GM12878 (cell line): ENCODE measurements at regions of chr1 and their contacts with region 1.

Region 1: DNA sequence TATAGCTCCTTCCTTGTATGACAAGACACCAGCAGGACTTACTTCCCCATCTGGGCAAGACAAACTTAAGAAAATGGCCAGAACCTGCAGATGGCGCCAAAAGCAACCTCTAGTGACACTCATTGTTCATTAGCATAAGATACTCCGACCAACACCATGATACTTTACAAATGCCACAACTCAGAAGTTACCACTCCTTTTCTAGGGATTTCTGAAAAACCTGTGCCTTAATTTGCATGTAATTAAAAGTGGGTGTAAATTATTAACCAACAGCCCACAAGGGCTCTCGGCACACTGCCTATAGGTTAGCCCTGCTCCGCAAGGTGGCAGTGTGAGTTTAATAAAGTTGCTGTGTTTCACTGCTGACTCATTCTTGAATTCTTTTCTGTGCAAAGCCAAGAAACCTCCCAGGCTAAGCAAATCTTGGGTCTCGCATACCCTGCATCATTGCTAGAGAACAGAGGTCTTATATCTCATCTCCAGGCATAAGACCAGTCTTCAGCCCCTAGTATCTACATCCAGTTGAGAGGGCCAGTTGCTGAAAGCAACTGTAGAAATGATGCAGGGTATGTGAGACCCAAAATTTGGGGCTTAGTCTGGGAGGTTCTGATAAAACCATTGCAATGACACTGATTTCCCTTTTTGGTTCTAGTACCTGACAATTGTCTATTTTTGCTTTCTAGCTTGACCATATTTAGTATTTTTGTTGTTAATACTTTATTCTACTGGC is 86.4 kb downstream of the FAF1 start:
- DNase-seq: peak; percentile 76
- ATAC-seq: peak; percentile 99
- H3K4me3 ChIP-seq: no peak overlapping the region
- H3K27ac ChIP-seq: peak overlapping the region; percentile 29; the same call in 1 of the 2 replicates
- H3K4me1 ChIP-seq: peaks cover 9% of the 10 kb centered on the region
- H3K27me3 ChIP-seq: no peaks in the 10 kb centered on the region
- CTCF ChIP-seq: peak; percentile 62 to 90 (median 62)
- EP300 ChIP-seq: no peak
- POLR2A ChIP-seq: no peak
- RAD21 ChIP-seq: peak; percentile 73

Region 2: GRCh38 chr1:50852889-50853288 is 20.7 kb before region 1 on chr1:
- CTCF ChIA-PET with region 1: interaction called, 47 read pairs
- POLR2A ChIA-PET with region 1: no interaction called
- RAD21 ChIA-PET with region 1: interaction called, 3 read pairs
- SMC1A ChIA-PET with region 1: interaction called, 7 read pairs
- in situ Hi-C with region 1: no loop called
- intact Hi-C with region 1: no loop called
- DNase-seq: no peak
- ATAC-seq: no peak
- H3K4me3 ChIP-seq: no peak overlapping the region
- H3K27ac ChIP-seq: no peak overlapping the region
- H3K4me1 ChIP-seq: no peaks in the 10 kb centered on the region
- H3K27me3 ChIP-seq: no peaks in the 10 kb centered on the region
- CTCF ChIP-seq: no peak
- EP300 ChIP-seq: no peak
- POLR2A ChIP-seq: no peak
- RAD21 ChIP-seq: no peak

Region 3: DNA sequence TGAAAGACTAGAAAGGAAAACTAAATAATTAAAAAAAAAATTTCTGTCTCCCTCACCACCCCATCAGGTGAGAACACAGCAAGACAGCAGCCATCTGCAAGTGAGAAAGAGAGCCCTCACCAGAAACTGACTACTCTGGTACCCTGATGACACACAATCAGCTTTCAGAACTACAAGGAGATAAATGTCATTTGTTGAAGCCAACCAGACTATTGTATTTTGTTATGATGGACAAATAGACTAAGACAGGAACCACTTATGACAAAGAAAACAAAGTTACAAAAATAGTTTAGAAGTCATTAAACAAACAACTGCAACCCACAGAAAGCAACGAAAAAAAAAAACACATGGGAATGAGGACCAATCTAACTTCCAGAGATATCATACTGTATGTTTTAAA is 11.9 kb before region 1 on chr1:
- CTCF ChIA-PET with region 1: interaction called, 47 read pairs
- POLR2A ChIA-PET with region 1: no interaction called
- RAD21 ChIA-PET with region 1: interaction called, 5 read pairs
- SMC1A ChIA-PET with region 1: interaction called, 7 read pairs
- in situ Hi-C with region 1: no loop called
- intact Hi-C with region 1: no loop called
- DNase-seq: no peak
- ATAC-seq: no peak
- H3K4me3 ChIP-seq: no peak overlapping the region
- H3K27ac ChIP-seq: no peak overlapping the region
- H3K4me1 ChIP-seq: no peaks in the 10 kb centered on the region
- H3K27me3 ChIP-seq: no peaks in the 10 kb centered on the region
- CTCF ChIP-seq: no peak
- EP300 ChIP-seq: no peak
- POLR2A ChIP-seq: no peak
- RAD21 ChIP-seq: no peak

Region 4: GRCh38 chr1:50968158-50968820 is 94.7 kb after region 1 on chr1:
- CTCF ChIA-PET with region 1: interaction called, 6 read pairs
- POLR2A ChIA-PET with region 1: no interaction called
- RAD21 ChIA-PET with region 1: no interaction called
- SMC1A ChIA-PET with region 1: interaction called, 4 read pairs
- in situ Hi-C with region 1: no loop called
- intact Hi-C with region 1: loop called (anchors 2 kb)
- DNase-seq: no peak
- ATAC-seq: peak; percentile 87
- H3K4me3 ChIP-seq: peak overlapping the region; percentile 99
- H3K27ac ChIP-seq: peak overlapping the region; percentile 92
- H3K4me1 ChIP-seq: no peaks in the 10 kb centered on the region; the same call in 1 of the 2 replicates
- H3K27me3 ChIP-seq: no peaks in the 10 kb centered on the region
- CTCF ChIP-seq: peak; percentile 28 to 36 (median 36); a peak in 4 of 6 replicates
- EP300 ChIP-seq: no peak
- POLR2A ChIP-seq: peak; percentile 75
- RAD21 ChIP-seq: peak; percentile 21; the same call in 1 of the 2 replicates

Region 5: GRCh38 chr1:51044834-51045233 is 171.2 kb after region 1 on chr1:
- CTCF ChIA-PET with region 1: interaction called, 4 read pairs
- POLR2A ChIA-PET with region 1: no interaction called
- RAD21 ChIA-PET with region 1: interaction called, 4 read pairs
- SMC1A ChIA-PET with region 1: no interaction called
- in situ Hi-C with region 1: no loop called
- intact Hi-C with region 1: loop called (anchors 1 kb)
- DNase-seq: no peak
- ATAC-seq: no peak
- H3K4me3 ChIP-seq: no peak overlapping the region
- H3K27ac ChIP-seq: no peak overlapping the region
- H3K4me1 ChIP-seq: no peaks in the 10 kb centered on the region
- H3K27me3 ChIP-seq: no peaks in the 10 kb centered on the region
- CTCF ChIP-seq: no peak; a peak in 1 of 6 replicates
- EP300 ChIP-seq: no peak
- POLR2A ChIP-seq: no peak
- RAD21 ChIP-seq: peak; percentile 43

Region 6: DNA sequence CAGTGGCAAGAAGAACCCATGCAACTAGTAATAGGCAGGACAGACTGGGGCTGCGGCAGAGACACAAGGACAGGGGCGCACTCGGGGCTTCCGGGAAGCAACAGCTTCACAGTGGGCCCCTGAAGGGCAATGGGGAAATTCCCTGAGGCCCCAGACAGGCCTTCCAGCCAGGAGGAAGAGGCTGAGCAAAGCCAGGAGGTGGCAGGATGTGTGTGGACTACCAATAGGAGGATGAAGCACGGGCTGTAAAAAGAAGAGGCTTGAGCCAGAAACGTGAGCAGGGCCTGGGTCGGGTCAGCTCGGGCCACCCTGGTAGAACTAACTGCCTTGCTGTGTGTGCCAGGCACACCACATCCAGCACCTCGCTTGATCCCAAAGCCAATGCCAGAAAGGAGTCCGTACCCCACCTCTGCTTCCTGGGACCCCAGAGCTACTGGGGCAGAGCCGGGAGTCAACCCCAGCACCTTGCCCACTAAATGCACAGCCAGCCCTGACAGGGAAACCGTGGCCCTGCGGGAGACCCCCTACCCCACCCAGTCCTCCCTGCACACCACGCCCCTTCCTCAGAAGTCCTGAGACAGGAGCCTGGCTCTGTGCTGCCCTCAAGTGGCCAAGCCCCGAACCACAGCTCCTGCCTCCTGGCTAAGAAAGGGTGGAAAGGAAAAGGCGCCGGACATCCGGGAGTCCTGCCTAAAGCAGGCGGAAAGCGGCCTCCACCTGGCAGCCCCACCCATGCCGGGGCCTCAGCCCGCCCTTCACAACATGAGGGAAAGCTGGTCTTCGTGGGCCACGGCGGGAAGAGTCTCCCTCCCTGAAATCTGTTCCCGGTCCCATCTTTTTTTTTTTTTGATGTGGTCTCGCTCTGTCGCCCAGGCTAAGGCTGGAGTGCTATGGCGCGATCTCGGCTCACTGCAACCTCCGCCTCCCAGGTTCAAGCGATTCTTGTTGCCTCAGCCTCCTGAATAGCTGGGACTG is 423.0 kb after region 1 on chr1:
- CTCF ChIA-PET with region 1: interaction called, 17 read pairs
- POLR2A ChIA-PET with region 1: no interaction called
- RAD21 ChIA-PET with region 1: interaction called, 3 read pairs
- SMC1A ChIA-PET with region 1: interaction called, 3 read pairs
- in situ Hi-C with region 1: no loop called
- intact Hi-C with region 1: loop called (anchors 10 kb)
- DNase-seq: peak; percentile 51
- ATAC-seq: peak; percentile 81
- H3K4me3 ChIP-seq: peak overlapping the region; percentile 62; the same call in 1 of the 2 replicates
- H3K27ac ChIP-seq: peak overlapping the region; percentile 23; the same call in 1 of the 2 replicates
- H3K4me1 ChIP-seq: peaks cover 32% of the 10 kb centered on the region
- H3K27me3 ChIP-seq: no peaks in the 10 kb centered on the region; a peak in 1 of 4 replicates
- CTCF ChIP-seq: peak; percentile 92 to 99 (median 97)
- EP300 ChIP-seq: 0 out of 4 replicates have a peak, but pooled peaks of 1 of the 2 experiments have one; percentile 16
- POLR2A ChIP-seq: no peak; the same call in 1 of the 2 replicates
- RAD21 ChIP-seq: peak; percentile 97